Endothelial cell of umbilical vein (primary cell): ENCODE measurements at regions of chr14 and their contacts with region 1.

Region 1: DNA sequence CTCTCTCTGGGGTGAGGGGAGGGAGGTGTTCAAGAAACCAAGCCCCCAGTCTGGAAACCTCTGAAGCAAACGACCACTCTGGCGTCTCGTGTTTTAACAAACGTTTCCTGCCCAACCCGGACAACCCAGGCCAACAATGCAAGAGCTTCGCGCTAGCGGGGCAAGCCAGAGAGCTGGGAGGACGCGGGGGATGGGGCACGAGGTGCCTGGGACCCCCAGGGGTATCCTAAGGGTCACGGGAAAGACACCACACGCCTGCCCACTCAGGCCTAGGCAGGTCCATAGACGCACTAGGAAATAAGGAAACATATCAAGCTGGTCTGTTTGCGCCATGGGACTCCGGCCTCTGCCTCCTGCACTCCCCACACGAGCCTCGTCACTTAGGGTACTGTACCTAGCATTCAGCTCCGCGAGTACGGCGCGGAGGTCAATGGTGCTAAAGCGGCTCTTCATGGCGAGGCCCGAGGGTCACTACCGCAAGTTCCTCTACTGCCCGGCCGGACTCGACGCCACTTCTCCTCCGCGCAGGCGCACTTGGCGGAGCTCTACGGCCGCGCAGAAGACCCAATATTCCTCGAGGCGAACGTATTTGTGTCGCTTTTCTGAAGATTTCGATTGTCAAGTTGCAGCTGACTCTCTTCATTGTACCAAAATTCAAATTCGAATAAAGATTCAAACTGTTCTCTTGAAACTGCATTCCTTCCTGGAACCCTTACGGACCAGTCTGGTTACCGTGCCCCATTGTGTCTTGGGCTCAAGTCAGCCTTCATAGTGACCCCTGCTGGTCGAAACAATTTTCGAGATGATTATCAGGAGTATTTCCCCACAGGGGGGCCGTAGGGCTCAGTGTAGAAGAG is at the start of gene NEMF:
- DNase-seq: peak; percentile 94
- H3K4me3 ChIP-seq: peak within 1 kb of the TSS; percentile 92 to 97 (median 94)
- H3K27ac ChIP-seq: peak within 1 kb of the TSS; percentile 83
- H3K4me1 ChIP-seq: peaks cover 11% of the 10 kb centered on the region
- H3K27me3 ChIP-seq: no peaks in the 10 kb centered on the region
- CTCF ChIP-seq: peak; percentile 68 to 87
- POLR2A ChIP-seq: peak; percentile 89
- total RNA-seq, gene NEMF: 71.4 and 74.2 TPM in 2 replicates

Region 2: GRCh38 chr14:49898485-49898884 is 46.0 kb after region 1 on chr14:
- CTCF ChIA-PET with region 1: no interaction called
- POLR2A ChIA-PET with region 1: no interaction called
- dilution Hi-C with region 1: no loop called
- intact Hi-C with region 1: no loop called
- DNase-seq: no peak
- H3K4me3 ChIP-seq: no peak overlapping the region
- H3K27ac ChIP-seq: no peak overlapping the region
- H3K4me1 ChIP-seq: peaks cover 36% of the 10 kb centered on the region
- H3K27me3 ChIP-seq: no peaks in the 10 kb centered on the region
- CTCF ChIP-seq: no peak
- POLR2A ChIP-seq: no peak

Region 3: DNA sequence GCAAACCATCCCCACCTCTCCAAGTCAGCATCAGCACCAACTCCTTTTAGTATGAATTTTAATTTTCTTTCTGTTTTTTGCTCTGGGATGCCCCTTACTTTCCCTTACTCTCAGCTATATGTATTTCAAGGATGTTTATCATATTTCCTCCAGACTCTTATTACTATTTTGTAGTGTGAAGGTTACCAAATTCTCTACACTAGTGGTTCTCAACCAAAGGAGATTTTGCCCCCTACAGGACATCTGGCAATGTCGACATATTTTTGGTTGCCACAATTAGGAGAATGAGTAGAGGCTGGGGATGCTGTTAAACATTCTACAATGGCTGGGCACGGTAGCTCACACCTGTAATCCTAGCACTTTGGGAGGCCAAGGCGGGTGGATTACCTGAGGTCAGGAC is 408.0 kb after region 1 on chr14:
- CTCF ChIA-PET with region 1: interaction called, 3 read pairs
- POLR2A ChIA-PET with region 1: no interaction called
- dilution Hi-C with region 1: no loop called
- intact Hi-C with region 1: loop called (anchors 1 kb)
- DNase-seq: peak; percentile 37
- H3K4me3 ChIP-seq: no peak overlapping the region
- H3K27ac ChIP-seq: no peak overlapping the region
- H3K4me1 ChIP-seq: no peaks in the 10 kb centered on the region
- H3K27me3 ChIP-seq: no peaks in the 10 kb centered on the region
- CTCF ChIP-seq: peak in 1 of 2 donors; percentile 39
- POLR2A ChIP-seq: no peak